Activated CD4-positive, alpha-beta T cell treated with anti-CD3 and anti-CD28 coated beads, Interleukin-2, amount 10 ng/mL, durations not matched to agents 7 days and 5 days (primary cell): ENCODE measurements at regions of chr5 and their contacts with region 1.

Region 1: DNA sequence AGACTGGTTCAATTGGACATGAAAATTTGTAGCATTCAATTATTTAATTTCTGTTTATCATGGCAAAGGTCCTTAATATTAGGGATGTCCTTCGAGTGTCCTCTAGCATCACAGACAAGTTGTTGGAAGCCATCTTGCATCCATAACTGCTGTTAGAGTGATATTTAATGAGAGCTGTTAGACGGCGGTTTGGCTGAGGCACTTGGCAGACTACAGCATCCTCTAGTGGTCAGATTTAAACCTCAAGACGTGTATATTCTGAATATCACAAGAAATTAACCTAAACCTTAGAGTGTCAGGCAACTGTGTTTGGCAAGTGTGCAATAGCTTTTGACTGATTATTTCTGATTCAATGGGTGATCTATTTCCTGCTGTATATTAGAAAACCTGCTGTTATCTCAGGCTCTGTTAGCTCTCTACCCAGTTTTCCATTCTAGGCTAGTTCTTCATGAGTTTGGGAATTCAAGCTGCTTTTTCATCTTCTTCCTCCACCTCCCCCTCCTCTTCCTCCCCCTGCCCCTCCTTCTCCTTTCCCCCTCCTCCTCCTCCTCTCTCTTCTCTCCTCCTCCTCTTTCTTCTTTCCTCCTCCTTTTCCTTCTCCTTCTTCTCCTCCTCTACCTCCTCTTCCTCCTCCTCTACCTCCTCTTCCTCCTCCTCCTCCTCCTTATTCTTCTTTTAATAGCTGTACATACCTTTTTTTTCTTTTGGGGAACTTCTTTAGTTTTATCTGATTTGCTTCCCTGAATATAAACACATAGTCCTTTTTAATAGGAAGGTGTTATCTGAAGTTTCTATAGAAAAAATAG is 8.6 kb downstream of the SPINK1 start:
- DNase-seq: peak; percentile 54
- H3K4me3 Mint-ChIP-seq: no peak overlapping the region
- H3K27ac Mint-ChIP-seq: no peak overlapping the region
- H3K4me1 Mint-ChIP-seq: no peaks in the 10 kb centered on the region
- H3K27me3 Mint-ChIP-seq: peaks cover 6% of the 10 kb centered on the region

Region 2: GRCh38 chr5:147628058-147628895 is 194.6 kb before region 1 on chr5:
- CTCF ChIA-PET with region 1: interaction called, 14 read pairs
- POLR2A ChIA-PET with region 1: no interaction called
- DNase-seq: peak; percentile 73
- H3K4me3 Mint-ChIP-seq: no peak overlapping the region
- H3K27ac Mint-ChIP-seq: no peak overlapping the region
- H3K4me1 Mint-ChIP-seq: no peaks in the 10 kb centered on the region
- H3K27me3 Mint-ChIP-seq: no peaks in the 10 kb centered on the region

Region 3: GRCh38 chr5:147776989-147777388 is 45.9 kb before region 1 on chr5:
- CTCF ChIA-PET with region 1: no interaction called
- POLR2A ChIA-PET with region 1: no interaction called
- DNase-seq: no peak
- H3K4me3 Mint-ChIP-seq: no peak overlapping the region
- H3K27ac Mint-ChIP-seq: no peak overlapping the region
- H3K4me1 Mint-ChIP-seq: peaks cover 17% of the 10 kb centered on the region
- H3K27me3 Mint-ChIP-seq: no peaks in the 10 kb centered on the region